Activated T-helper 2 cell treated with anti-CD3 and anti-CD28 coated beads, Interferon-gamma antibody, Interleukin-2, Interleukin-4, amounts not matched to agents 10 μg/mL and 5 μg/mL and 100 μg/mL, durations not matched to agents 14 hours and 24 hours and 36 hours (primary cell): ENCODE measurements at regions of chr6 and their contacts with region 1.

Region 1: GRCh38 chr6:16956361-16956760 is 145.5 kb upstream of the STMND1 start:
- DNase-seq: no peak
- H3K4me3 Mint-ChIP-seq: no peak overlapping the region
- H3K27ac Mint-ChIP-seq: peak overlapping the region; percentile 81
- H3K4me1 Mint-ChIP-seq: peaks cover 43% of the 10 kb centered on the region
- H3K27me3 Mint-ChIP-seq: peaks cover 37% of the 10 kb centered on the region

Region 2: DNA sequence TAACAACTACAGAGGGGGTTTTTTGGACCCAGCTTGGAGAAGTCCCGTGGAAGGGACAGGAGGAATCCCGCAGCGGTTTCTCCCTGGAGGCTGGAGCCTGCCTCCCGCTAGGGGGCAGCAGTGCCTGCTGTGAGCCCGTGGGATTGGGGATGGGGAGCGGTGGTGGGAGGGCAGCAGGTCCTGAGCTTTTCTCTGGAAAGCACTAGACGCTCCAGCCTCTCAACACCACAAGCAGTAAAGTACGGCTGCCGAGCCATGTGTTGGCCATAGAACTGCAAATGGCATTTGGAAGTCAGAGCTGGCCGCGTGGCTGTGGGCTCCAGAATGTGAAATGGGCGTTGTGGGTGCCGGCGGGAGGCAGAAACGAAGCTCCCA is 670.2 kb before region 1 on chr6:
- intact Hi-C with region 1: no loop called
- DNase-seq: no peak
- H3K4me3 Mint-ChIP-seq: no peak overlapping the region
- H3K27ac Mint-ChIP-seq: no peak overlapping the region
- H3K4me1 Mint-ChIP-seq: no peaks in the 10 kb centered on the region
- H3K27me3 Mint-ChIP-seq: peaks cover 9% of the 10 kb centered on the region

Region 3: DNA sequence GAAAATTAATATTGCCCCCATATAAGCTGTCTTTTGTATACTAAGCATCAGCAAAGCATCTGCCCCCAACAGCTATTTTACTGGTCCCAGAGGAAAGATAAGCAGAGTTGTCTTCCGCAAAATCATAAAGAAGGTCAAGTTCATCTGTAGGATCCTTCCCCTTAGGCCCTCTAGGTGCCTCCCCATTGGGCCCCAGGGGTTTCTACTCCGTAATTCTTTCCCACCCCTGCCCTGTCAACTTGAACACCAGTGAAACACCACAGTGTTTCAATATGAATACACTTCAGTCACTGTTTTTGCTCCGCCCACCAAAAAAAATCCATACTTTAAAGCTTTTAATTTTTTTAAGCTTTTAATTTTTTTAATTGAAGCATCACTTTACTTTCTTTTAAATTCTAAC is 354.3 kb before region 1 on chr6:
- intact Hi-C with region 1: no loop called
- DNase-seq: peak; percentile 13
- H3K4me3 Mint-ChIP-seq: no peak overlapping the region
- H3K27ac Mint-ChIP-seq: peak overlapping the region; percentile 74
- H3K4me1 Mint-ChIP-seq: peaks cover 37% of the 10 kb centered on the region
- H3K27me3 Mint-ChIP-seq: no peaks in the 10 kb centered on the region

Region 4: GRCh38 chr6:16651871-16652270 is 304.5 kb before region 1 on chr6:
- intact Hi-C with region 1: loop called (anchors 10 kb)
- DNase-seq: peak; percentile 38
- H3K4me3 Mint-ChIP-seq: no peak overlapping the region
- H3K27ac Mint-ChIP-seq: peak overlapping the region; percentile 51
- H3K4me1 Mint-ChIP-seq: peaks cover 49% of the 10 kb centered on the region
- H3K27me3 Mint-ChIP-seq: no peaks in the 10 kb centered on the region

Region 5: DNA sequence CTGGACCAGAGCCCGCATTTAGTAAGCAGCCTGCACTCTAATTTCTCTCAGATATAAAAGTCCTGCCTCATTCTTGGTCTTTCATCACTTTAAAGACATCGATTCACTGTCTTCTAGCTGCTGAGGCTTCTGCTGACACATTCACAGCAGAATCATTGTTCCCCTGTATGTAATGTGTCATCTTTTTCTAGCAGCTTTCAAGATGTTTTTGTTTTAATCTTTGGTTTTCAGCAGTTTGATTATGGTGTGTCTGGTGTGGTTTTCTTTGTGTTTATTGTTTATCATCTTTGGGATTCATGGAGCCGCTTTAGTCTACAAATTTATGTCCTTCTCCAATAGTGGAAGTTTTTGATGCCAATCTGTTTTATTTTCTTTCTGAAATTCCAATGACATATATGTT is 11.8 kb before region 1 on chr6:
- intact Hi-C with region 1: no loop called
- DNase-seq: no peak
- H3K4me3 Mint-ChIP-seq: no peak overlapping the region
- H3K27ac Mint-ChIP-seq: no peak overlapping the region
- H3K4me1 Mint-ChIP-seq: peaks cover 8% of the 10 kb centered on the region
- H3K27me3 Mint-ChIP-seq: peaks cover 51% of the 10 kb centered on the region

Region 6: GRCh38 chr6:16999491-17000436 is 43.4 kb after region 1 on chr6:
- intact Hi-C with region 1: no loop called
- DNase-seq: no peak
- H3K4me3 Mint-ChIP-seq: no peak overlapping the region
- H3K27ac Mint-ChIP-seq: no peak overlapping the region
- H3K4me1 Mint-ChIP-seq: no peaks in the 10 kb centered on the region
- H3K27me3 Mint-ChIP-seq: peaks cover 42% of the 10 kb centered on the region